ENCODE measurements at regions of chr4 and their contacts with region 1.

Region 1: DNA sequence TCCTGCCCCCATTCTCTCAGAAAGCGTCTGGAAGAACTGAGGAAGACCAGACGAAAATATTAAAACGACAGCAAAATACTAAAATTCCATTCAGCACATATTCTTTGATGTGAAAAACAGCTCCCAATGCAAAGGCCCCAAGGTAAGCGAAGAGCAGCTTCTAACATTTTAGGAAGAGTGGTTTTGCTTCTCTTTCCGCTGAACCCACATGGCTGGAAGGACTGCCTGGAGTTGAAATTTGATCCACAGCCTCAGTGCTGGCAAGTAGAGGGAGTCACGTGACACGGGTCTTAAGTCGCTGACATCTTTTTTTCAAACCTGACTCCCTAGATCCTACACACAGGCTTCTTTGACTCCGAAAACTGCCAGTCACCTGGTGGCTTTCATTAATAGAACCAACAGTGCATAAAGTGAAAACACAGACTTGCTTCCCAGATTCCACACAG is at the start of gene FAM13A:
- DNase-seq: peak; percentile 86
- ATAC-seq: peak; percentile 93
- H3K4me3 ChIP-seq: peak within 1 kb of the TSS; percentile 80
- H3K27ac ChIP-seq: peak within 1 kb of the TSS; percentile 23
- H3K4me1 ChIP-seq: peaks cover 17% of the 10 kb centered on the region
- H3K27me3 ChIP-seq: no peaks in the 10 kb centered on the region
- CTCF ChIP-seq: no peak
- total RNA-seq, gene FAM13A: 8.6 and 14.6 TPM in 2 replicates

Region 2: GRCh38 chr4:88975958-88976774 is 80.8 kb before region 1 on chr4:
- CTCF ChIA-PET with region 1: no interaction called
- POLR2A ChIA-PET with region 1: interaction called, 15 read pairs
- intact Hi-C with region 1: no loop called
- DNase-seq: no peak
- ATAC-seq: no peak
- H3K4me3 ChIP-seq: no peak overlapping the region
- H3K27ac ChIP-seq: no peak overlapping the region
- H3K4me1 ChIP-seq: no peaks in the 10 kb centered on the region
- H3K27me3 ChIP-seq: no peaks in the 10 kb centered on the region
- CTCF ChIP-seq: no peak

Region 3: DNA sequence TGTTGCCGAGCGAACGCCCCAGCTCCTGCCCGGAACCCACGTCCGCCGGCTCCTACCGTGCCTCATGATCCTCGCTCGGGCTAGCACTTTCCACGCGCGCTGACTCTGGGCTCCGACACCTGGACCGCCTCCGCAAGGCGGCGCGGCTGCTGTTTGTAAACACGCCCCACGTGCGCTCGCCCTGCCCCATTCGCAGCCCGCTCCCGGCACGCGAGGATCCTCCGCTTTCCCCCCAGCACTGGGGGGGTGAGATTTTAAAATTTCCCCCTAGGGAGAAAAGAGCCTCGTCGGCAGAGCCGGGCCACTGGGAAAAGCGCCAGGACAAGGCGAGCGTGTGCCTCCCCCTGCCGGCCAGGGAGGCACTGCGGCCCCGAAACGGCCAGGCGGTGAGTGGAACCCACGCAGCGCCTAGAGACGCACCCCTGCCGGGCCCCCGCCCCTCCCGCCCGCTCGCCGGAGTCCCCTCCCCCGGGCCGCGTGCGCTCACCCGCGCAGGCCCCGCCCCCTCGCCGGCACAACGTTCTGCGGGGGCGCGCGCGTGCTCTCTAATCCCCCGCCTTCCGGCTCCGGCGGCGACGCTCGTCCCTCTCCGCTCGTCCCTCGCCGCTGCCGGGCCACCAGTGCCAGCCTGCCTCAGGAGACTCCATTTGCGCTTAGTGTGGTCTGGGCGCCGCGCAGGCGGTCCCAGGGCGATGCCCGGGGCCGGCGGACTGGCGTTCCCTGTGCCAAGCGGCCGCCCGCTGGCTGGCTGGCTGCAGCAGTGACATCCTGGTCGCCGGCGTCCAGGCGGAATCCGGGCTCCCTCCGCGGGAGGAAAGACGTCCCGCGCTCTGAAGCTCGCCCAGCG is 54.2 kb after region 1 on chr4 and contains the start of gene TIGD2:
- CTCF ChIA-PET with region 1: no interaction called
- POLR2A ChIA-PET with region 1: no interaction called
- intact Hi-C with region 1: loop called (anchors 5 kb)
- DNase-seq: peak; percentile 82
- ATAC-seq: peak; percentile 90
- H3K4me3 ChIP-seq: peak within 1 kb of the TSS; percentile 86
- H3K27ac ChIP-seq: 0 out of 2 replicates have a peak within 1 kb of the TSS, but pooled peaks have one; percentile 11
- H3K4me1 ChIP-seq: peaks cover 16% of the 10 kb centered on the region
- H3K27me3 ChIP-seq: peaks cover 5% of the 10 kb centered on the region; the same call in 1 of the 2 replicates
- CTCF ChIP-seq: peak; percentile 62
- total RNA-seq, gene TIGD2: 4.2 and 5.4 TPM in 2 replicates